Aorta (tissue), 5 donors: ENCODE measurements at regions of chr5 and their contacts with region 1.

Region 1: DNA sequence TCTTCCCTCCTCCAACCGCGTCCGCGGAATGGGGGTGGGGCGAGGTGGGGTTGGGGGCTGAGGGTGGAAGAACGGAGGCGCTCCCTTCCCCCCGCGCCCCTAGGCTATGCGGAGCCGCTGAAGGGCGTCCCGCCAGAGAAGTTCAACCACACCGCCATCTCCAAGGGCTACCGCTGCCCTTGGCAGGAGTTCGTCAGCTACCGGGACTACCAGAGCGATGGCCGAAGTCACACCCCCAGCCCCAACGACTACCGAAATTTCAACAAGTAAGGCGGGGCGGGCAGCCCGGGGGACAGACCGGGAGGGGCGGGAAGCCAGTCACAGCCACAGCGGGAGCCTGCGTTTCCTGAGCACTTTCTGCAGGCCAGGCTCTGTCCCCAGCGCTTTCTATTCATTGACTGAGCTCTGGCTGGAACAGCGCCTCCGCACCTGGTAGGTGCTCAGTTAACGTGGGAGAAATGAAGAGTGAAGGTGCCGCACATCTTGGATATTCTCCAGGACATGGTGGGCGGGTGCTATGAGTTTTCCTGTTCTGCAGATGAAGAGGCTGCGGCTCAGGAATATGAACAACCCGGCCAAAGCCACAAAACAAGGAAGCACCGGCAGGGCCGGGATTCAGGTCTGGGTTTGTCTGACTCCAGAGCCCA is 11.3 kb downstream of the MYOZ3 start:
- DNase-seq: peak; percentile 73 to 88
- ATAC-seq: peak; percentile 44
- H3K4me3 ChIP-seq: no peak overlapping the region
- H3K27ac ChIP-seq: no peak overlapping the region
- H3K4me1 ChIP-seq: peaks cover 0 to 1% of the 10 kb centered on the region in 2 donors
- H3K27me3 ChIP-seq: no peaks in the 10 kb centered on the region

Region 2: GRCh38 chr5:150449517-150450339 is 222.6 kb before region 1 on chr5 and contains the start of gene RPS14:
- intact Hi-C with region 1: loop called in 1 of 2 experiments (anchors 10 kb)
- DNase-seq: peak; percentile 97 to 98
- ATAC-seq: peak; percentile 98
- H3K4me3 ChIP-seq: peak within 1 kb of the TSS; percentile 49 to 78
- H3K27ac ChIP-seq: peak within 1 kb of the TSS; percentile 49 to 79
- H3K4me1 ChIP-seq: peaks cover 0 to 1% of the 10 kb centered on the region in 2 donors
- H3K27me3 ChIP-seq: no peaks in the 10 kb centered on the region
- total RNA-seq, gene RPS14: 1,419 to 1,480 TPM

Region 3: DNA sequence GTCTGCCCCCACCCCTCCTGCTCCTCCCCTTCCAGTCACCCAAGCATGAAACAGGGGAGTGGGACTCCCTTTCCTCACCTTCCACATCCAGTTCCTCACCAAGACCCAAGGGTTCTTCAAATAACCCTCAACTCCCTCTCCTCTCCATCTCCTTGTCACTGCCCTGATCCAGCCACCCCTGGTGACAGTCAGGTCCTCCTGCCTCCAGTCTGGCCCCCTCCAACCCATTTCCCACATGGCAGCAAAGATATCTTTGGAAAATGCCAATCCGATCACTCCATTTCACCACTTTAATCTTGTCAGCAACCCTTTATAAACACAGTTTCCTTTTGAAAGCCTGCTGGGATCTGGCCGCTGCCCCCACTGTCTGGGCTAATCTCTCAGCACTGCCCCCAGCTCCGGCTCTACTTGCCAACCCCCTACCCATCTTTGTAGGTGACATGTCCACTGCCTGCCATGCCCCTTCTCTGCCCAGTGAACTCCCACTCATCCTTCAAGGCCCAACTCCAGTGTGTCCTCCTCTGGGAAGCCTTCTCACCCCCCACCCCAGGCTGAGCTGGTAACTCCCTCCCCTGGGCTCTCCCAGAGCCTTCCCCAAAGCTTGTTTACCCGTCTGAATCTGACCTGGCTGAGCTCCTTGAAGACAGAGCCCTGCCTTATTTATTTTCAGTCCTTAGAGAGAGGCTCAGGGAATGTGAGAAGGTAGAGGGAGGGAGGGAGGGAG is 12.1 kb before region 1 on chr5:
- intact Hi-C with region 1: no loop called
- DNase-seq: peak in 1 of 2 donors; percentile 38
- ATAC-seq: peak; percentile 1
- H3K4me3 ChIP-seq: no peak overlapping the region
- H3K27ac ChIP-seq: peak overlapping the region; percentile 23 to 31
- H3K4me1 ChIP-seq: no peaks in the 10 kb centered on the region
- H3K27me3 ChIP-seq: no peaks in the 10 kb centered on the region

Region 4: GRCh38 chr5:150731669-150732242 is 59.4 kb after region 1 on chr5:
- intact Hi-C with region 1: no loop called
- DNase-seq: no peak
- ATAC-seq: no peak
- H3K4me3 ChIP-seq: no peak overlapping the region
- H3K27ac ChIP-seq: no peak overlapping the region
- H3K4me1 ChIP-seq: no peaks in the 10 kb centered on the region
- H3K27me3 ChIP-seq: no peaks in the 10 kb centered on the region